IMR-90 (cell line): ENCODE measurements at regions of chr11 and their contacts with region 1.

Region 1: DNA sequence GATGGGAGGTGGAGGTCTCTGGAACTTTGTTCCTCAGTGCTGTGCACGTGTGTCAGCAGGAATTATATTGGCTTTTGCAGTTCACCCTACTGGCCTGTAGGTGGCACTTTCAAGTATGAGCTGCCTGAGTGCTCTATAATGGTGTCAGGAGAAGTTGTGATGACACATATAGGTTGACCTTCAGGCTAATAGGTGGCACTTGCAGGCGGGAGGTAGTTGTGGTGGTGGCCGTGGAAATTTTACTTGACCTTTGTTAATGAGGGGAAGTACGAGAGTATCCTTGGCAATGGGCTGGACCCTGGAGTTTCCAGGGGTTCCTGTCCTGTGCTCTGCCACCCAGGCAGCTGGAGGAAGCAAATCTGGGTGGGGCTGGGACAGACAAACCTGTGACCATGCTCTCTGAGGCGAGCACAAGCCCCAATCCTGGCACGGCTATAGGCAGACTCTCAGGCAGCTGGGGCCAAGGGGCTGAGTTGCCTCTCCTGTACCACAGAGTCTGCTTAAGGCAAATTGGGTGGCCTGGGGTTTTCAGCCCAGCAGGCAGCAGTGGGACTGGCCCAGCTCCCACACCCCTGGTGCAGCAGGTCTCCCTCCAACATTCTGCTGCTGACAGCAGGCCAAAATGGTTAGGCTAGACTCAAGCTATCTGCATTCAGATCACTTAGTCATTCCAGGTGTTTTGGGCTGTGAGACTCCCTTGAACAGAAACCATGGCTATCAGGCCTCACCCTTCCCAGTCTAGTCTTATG is 147.5 kb upstream of the CTSC start:
- DNase-seq: peak; percentile 23
- ATAC-seq: no peak; the same call in 1 of the 2 replicates
- H3K4me3 ChIP-seq: no peak overlapping the region
- H3K27ac ChIP-seq: no peak overlapping the region
- H3K4me1 ChIP-seq: peaks cover 5% of the 10 kb centered on the region; the same call in 1 of the 2 replicates
- H3K27me3 ChIP-seq: no peaks in the 10 kb centered on the region
- CTCF ChIP-seq: peak; percentile 49
- POLR2A ChIP-seq: no peak
- RAD21 ChIP-seq: peak; percentile 27; the same call in 1 of the 2 replicates

Region 2: DNA sequence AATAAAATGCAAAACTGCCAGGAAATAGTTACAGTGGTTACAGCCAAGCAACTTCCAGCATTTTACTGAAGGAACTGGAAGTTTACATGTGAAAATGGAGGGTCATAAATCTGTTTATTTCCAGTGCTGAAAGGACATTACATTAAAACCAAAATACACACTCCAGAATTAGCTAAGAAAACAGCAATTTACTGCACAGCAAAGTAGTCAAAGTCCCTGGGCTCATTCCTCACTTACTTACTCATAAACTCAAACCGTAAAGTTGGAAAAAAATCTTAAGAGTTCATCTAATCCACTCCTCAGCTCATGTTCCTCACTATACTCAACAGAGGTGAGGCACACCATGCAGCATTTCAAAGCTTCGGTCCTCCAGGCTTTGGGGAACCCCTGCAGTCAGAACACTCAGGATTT is 164.9 kb before region 1 on chr11:
- CTCF ChIA-PET with region 1: no interaction called
- POLR2A ChIA-PET with region 1: no interaction called
- dilution Hi-C with region 1: no loop called
- in situ Hi-C with region 1: no loop called
- intact Hi-C with region 1: loop called (anchors 5 kb)
- DNase-seq: peak; percentile 76
- ATAC-seq: peak; percentile 79
- H3K4me3 ChIP-seq: no peak overlapping the region
- H3K27ac ChIP-seq: peak overlapping the region; percentile 5; the same call in 1 of the 2 replicates
- H3K4me1 ChIP-seq: peaks cover 2% of the 10 kb centered on the region; the same call in 1 of the 2 replicates
- H3K27me3 ChIP-seq: no peaks in the 10 kb centered on the region
- CTCF ChIP-seq: no peak
- POLR2A ChIP-seq: no peak
- RAD21 ChIP-seq: no peak

Region 3: GRCh38 chr11:88330826-88331428 is 154.1 kb before region 1 on chr11:
- CTCF ChIA-PET with region 1: no interaction called
- POLR2A ChIA-PET with region 1: no interaction called
- dilution Hi-C with region 1: no loop called
- in situ Hi-C with region 1: no loop called
- intact Hi-C with region 1: no loop called
- DNase-seq: no peak
- ATAC-seq: no peak
- H3K4me3 ChIP-seq: no peak overlapping the region
- H3K27ac ChIP-seq: no peak overlapping the region
- H3K4me1 ChIP-seq: peaks cover 2% of the 10 kb centered on the region
- H3K27me3 ChIP-seq: no peaks in the 10 kb centered on the region
- CTCF ChIP-seq: no peak
- POLR2A ChIP-seq: no peak
- RAD21 ChIP-seq: no peak

Region 4: GRCh38 chr11:88535916-88536547 is 51.0 kb after region 1 on chr11:
- CTCF ChIA-PET with region 1: interaction called, 4 read pairs
- POLR2A ChIA-PET with region 1: no interaction called
- dilution Hi-C with region 1: no loop called
- in situ Hi-C with region 1: no loop called
- intact Hi-C with region 1: loop called (anchors 2 kb)
- DNase-seq: peak; percentile 92
- ATAC-seq: peak; percentile 97
- H3K4me3 ChIP-seq: no peak overlapping the region
- H3K27ac ChIP-seq: peak overlapping the region; percentile 97
- H3K4me1 ChIP-seq: peaks cover 8% of the 10 kb centered on the region
- H3K27me3 ChIP-seq: no peaks in the 10 kb centered on the region
- CTCF ChIP-seq: no peak
- POLR2A ChIP-seq: no peak
- RAD21 ChIP-seq: no peak